ENCODE measurements at regions of chr2 and their contacts with region 1.

Region 1: DNA sequence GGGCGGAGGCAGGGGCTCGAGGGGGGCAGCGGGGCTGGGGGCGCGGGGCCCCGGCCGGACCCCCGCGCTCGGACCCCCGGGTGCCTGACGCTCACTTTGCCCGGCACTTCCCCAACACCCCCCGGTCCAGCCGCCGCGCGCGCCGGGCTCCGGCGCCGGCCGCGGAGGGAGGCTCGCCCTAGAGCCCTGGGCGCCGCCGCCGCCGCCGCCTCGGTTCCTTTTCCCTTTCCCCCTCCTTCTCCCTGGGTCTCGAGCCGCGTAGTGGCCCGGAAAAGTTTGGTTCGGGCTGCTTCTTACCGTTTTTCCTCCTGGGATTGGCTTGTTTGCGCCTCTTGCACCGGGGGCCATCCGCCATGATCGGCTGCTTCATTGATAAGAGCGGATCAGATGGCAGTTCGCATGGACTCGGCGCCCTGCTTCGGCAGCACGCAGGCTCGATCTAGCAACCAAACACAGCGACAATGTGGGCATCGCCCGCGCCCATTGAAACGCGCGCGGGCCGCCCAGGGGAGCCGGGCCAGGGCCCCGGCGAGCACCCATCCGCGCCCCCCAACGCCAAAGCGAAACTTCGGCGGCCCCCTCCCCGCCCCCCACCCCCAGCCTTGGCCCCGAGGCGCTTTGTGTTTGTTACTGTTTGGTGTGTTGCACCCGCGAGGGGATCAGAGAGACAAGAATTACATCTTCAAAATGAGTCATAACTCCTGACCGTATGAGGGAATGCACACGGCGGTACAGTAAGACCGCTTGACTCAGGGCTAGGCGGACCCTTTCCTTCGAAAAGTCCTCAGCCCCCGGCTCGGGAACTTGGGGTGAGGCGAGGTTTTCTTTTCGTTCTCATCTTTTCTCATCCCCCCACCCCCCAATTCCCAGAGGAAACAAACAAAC is 2.7 kb downstream of the ZEB2 start:
- DNase-seq: peak; percentile 72
- H3K4me3 ChIP-seq: peak overlapping the region; percentile 86 to 95
- H3K27ac ChIP-seq: peak overlapping the region; percentile 99 to 100
- H3K4me1 ChIP-seq: peaks cover 21% of the 10 kb centered on the region
- H3K27me3 ChIP-seq: no peaks in the 10 kb centered on the region
- CTCF ChIP-seq: no peak
- POLR2A ChIP-seq: no peak

Region 2: GRCh38 chr2:144430722-144431391 is 86.4 kb before region 1 on chr2:
- intact Hi-C with region 1: loop called (anchors 10 kb)
- DNase-seq: no peak
- H3K4me3 ChIP-seq: no peak overlapping the region
- H3K27ac ChIP-seq: peak overlapping the region; percentile 64 to 80
- H3K4me1 ChIP-seq: peaks cover 42% of the 10 kb centered on the region
- H3K27me3 ChIP-seq: no peaks in the 10 kb centered on the region
- CTCF ChIP-seq: no peak
- POLR2A ChIP-seq: no peak

Region 3: DNA sequence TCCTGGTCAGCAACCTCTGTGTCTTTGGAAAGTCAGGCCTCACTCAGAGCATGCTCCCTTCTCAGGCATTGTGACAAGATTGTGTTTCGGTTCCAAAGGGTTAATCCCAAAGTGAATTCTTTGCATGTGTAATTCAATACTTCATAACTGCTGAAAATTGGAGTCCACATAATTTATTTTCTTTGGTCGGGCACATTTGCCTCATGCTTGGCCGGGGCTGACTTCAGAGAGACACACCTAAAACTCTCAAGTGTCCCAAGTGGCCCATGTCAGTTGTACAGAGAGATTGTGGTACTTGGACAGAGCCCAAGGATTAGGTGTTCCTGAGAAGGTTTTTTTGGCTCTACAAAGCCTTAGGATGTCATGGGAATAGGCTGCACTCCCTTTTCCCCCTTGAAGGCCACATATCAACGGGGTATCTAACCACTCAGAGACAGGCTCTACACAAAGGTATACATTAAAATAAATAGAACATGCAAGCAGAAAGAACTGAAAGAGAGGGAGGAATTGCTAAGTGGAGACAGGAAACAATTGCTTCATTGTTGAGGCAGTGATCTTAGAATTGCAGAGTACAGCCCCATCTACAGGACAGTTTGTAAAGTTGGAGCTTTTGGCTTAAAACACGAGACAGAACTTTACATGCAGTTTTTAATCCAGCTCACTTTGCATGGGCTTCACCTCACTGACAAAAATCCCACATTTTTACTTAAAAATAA is 1235.0 kb after region 1 on chr2:
- intact Hi-C with region 1: loop called (anchors 10 kb)
- DNase-seq: no peak
- H3K4me3 ChIP-seq: no peak overlapping the region
- H3K27ac ChIP-seq: peak overlapping the region in 1 of 2 donors; percentile 50
- H3K4me1 ChIP-seq: peaks cover 13% of the 10 kb centered on the region
- H3K27me3 ChIP-seq: no peaks in the 10 kb centered on the region
- CTCF ChIP-seq: peak; percentile 25 to 68 (median 67)
- POLR2A ChIP-seq: no peak

Measured in testis (tissue), 5 donors.